AG04450 (cell line): ENCODE measurements at regions of chr21 and their contacts with region 1.

Region 1: GRCh38 chr21:17819114-17819876 is at the start of gene C21orf91:
- DNase-seq: peak; percentile 81
- H3K4me3 ChIP-seq: peak within 1 kb of the TSS; percentile 81
- H3K27ac ChIP-seq: peak within 1 kb of the TSS; percentile 63
- H3K27me3 ChIP-seq: no peaks in the 10 kb centered on the region
- CTCF ChIP-seq: no peak
- polyA plus RNA-seq, gene C21orf91: 11.2 and 17.5 TPM in 2 replicates

Region 2: GRCh38 chr21:17848228-17848627 is 28.9 kb after region 1 on chr21:
- CTCF ChIA-PET with region 1: interaction called, 3 read pairs
- POLR2A ChIA-PET with region 1: interaction called, 23 read pairs
- DNase-seq: peak; percentile 90
- H3K4me3 ChIP-seq: no peak overlapping the region
- H3K27ac ChIP-seq: peak overlapping the region; percentile 89
- H3K27me3 ChIP-seq: no peaks in the 10 kb centered on the region
- CTCF ChIP-seq: no peak

Region 3: DNA sequence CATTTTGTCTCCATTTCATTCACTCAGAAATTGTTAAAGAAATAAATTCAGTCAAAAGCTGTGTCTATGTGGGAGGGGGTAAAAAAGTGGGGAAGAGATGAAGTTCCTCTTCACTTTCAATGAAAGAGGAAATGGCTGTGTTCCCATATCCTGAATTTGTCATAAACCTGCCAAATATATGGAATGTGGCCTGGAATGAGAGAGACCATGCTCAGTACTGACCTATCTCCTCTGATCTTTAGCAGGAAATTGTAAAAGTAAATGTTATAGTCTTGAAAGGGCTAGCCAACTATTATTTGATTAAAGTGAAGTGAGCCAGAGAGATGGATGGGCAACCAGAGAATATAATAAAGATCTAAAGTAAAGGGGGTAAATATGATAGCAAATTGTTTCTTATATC is 130.1 kb after region 1 on chr21:
- CTCF ChIA-PET with region 1: no interaction called
- POLR2A ChIA-PET with region 1: no interaction called
- DNase-seq: no peak
- H3K4me3 ChIP-seq: no peak overlapping the region
- H3K27ac ChIP-seq: no peak overlapping the region
- H3K27me3 ChIP-seq: no peaks in the 10 kb centered on the region
- CTCF ChIP-seq: no peak